ENCODE measurements at regions of chr19 and their contacts with region 1.

Region 1: DNA sequence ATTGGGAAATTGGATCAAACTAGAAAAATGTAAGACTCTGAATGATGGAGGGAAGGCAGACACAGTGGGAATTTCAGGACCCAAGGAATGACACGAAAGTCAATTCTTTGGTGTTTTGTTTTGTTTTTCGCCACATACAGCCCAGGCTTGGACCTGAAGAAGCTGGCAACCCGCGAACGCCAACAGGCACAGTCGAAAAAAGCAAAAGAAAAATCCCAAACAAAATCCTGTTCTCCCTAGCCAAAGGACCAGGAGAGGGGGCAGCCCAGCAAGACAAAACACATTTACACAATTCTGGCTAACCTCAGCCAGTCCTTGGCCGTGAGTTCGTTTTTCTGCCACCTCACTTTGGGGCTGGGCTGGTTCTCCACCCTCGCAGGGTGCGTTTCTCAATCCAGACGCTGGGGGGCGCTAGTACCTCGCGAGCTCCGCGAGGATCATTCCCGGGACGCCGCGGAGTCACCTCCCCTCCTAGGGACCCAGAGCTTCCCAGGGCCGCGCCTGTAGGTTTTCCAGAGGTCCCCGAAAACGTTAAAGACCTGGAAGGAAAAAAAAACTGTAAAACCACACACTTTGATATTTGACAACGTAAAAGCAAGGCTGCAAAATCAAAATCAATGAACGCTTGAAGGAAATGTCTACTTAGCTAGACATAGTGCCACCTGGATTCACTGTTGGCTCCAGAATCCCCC is 34.9 kb upstream of the TPM4 start:
- DNase-seq: peak; percentile 60 to 75 (median 66)
- H3K4me3 ChIP-seq: no peak overlapping the region
- H3K4me3 Mint-ChIP-seq: peak overlapping the region in 6 of 8 donors; percentile 7 to 63 (median 29)
- H3K27ac ChIP-seq: no peak overlapping the region
- H3K27ac Mint-ChIP-seq: peak overlapping the region in 1 of 7 donors; percentile 29
- H3K4me1 ChIP-seq: peaks cover 10% of the 10 kb centered on the region
- H3K4me1 Mint-ChIP-seq: peaks cover 7 to 17% (median 12%) of the 10 kb centered on the region in 4 donors
- H3K27me3 ChIP-seq: no peaks in the 10 kb centered on the region
- H3K27me3 Mint-ChIP-seq: peaks cover 0 to 1% of the 10 kb centered on the region in 2 donors

Region 2: DNA sequence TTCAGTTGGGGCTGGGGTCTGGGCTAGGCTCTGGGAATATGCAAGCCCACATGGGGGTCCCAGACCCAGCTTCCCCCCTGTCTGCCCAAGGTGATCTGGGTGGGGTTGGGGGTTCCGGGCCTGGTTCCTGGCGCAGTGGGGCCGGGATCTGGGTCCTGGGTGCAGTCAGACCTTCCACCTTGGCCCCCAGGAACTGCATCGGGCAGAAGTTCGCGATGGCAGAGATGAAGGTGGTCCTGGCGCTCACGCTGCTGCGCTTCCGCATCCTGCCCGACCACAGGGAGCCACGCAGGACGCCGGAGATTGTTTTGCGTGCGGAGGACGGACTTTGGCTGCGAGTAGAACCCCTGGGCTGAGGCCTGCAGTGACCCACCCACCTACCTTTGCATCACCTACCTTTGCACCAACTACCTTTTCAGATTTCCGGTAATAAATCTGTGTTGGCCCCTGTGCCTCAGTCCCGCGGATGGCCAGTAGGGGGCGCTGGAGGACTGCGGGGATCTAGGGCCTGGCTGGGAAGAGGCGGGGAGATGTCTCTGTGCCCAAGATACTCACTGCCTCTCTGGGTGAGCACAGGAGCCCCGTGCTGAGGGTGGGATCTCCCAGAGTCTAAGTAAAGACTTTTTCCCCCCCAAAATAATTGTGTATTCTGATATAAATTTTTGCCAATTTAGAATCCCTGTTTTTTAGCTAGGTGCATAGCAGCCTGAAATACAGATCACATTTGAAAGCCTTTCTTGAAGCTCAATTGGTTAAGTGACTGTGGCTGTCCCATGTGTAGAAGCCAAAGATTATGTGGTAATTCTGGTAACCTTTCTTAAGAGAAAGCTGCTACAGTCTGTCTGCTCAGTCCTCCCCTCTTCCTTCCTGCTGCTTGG is 412.2 kb before region 1 on chr19:
- CTCF ChIA-PET with region 1: interaction called, 11 read pairs
- POLR2A ChIA-PET with region 1: no interaction called
- intact Hi-C with region 1: loop called (anchors 10 kb)
- DNase-seq: peak; percentile 80 to 86 (median 81)
- H3K4me3 ChIP-seq: no peak overlapping the region
- H3K4me3 Mint-ChIP-seq: no peak overlapping the region
- H3K27ac ChIP-seq: no peak overlapping the region
- H3K27ac Mint-ChIP-seq: no peak overlapping the region
- H3K4me1 ChIP-seq: peaks cover 14% of the 10 kb centered on the region
- H3K4me1 Mint-ChIP-seq: peaks cover 2 to 13% (median 9%) of the 10 kb centered on the region in 4 donors
- H3K27me3 ChIP-seq: no peaks in the 10 kb centered on the region
- H3K27me3 Mint-ChIP-seq: peaks cover 3 to 14% of the 10 kb centered on the region in 2 donors

Region 3: GRCh38 chr19:15986701-15987100 is 54.7 kb before region 1 on chr19:
- CTCF ChIA-PET with region 1: no interaction called
- POLR2A ChIA-PET with region 1: no interaction called
- intact Hi-C with region 1: no loop called
- DNase-seq: peak in 2 of 5 donors; percentile 18 to 39
- H3K4me3 ChIP-seq: no peak overlapping the region
- H3K4me3 Mint-ChIP-seq: no peak overlapping the region
- H3K27ac ChIP-seq: no peak overlapping the region
- H3K27ac Mint-ChIP-seq: no peak overlapping the region
- H3K4me1 ChIP-seq: no peaks in the 10 kb centered on the region
- H3K4me1 Mint-ChIP-seq: peaks cover 0 to 9% (median 3%) of the 10 kb centered on the region in 4 donors
- H3K27me3 ChIP-seq: peaks cover 6% of the 10 kb centered on the region
- H3K27me3 Mint-ChIP-seq: peaks cover 14 to 20% of the 10 kb centered on the region in 2 donors

Region 4: GRCh38 chr19:16062789-16063188 is 21.3 kb after region 1 on chr19:
- CTCF ChIA-PET with region 1: interaction called, 26 read pairs
- POLR2A ChIA-PET with region 1: interaction called, 3 read pairs
- intact Hi-C with region 1: no loop called
- DNase-seq: peak; percentile 62 to 73 (median 67)
- H3K4me3 ChIP-seq: no peak overlapping the region
- H3K4me3 Mint-ChIP-seq: no peak overlapping the region
- H3K27ac ChIP-seq: no peak overlapping the region
- H3K27ac Mint-ChIP-seq: peak overlapping the region in 4 of 7 donors; percentile 15 to 56 (median 34)
- H3K4me1 ChIP-seq: peaks cover 12% of the 10 kb centered on the region
- H3K4me1 Mint-ChIP-seq: peaks cover 13 to 22% (median 19%) of the 10 kb centered on the region in 4 donors
- H3K27me3 ChIP-seq: no peaks in the 10 kb centered on the region
- H3K27me3 Mint-ChIP-seq: no peaks in the 10 kb centered on the region

Region 5: GRCh38 chr19:16088351-16089009 is 47.0 kb after region 1 on chr19:
- CTCF ChIA-PET with region 1: interaction called, 15 read pairs
- POLR2A ChIA-PET with region 1: interaction called, 6 read pairs
- intact Hi-C with region 1: no loop called
- DNase-seq: peak in 1 of 5 donors; percentile 10
- H3K4me3 ChIP-seq: no peak overlapping the region
- H3K4me3 Mint-ChIP-seq: peak overlapping the region in 4 of 8 donors; percentile 15 to 54 (median 34)
- H3K27ac ChIP-seq: no peak overlapping the region
- H3K27ac Mint-ChIP-seq: peak overlapping the region; percentile 61 to 82 (median 72)
- H3K4me1 ChIP-seq: peaks cover 53% of the 10 kb centered on the region
- H3K4me1 Mint-ChIP-seq: peaks cover 27 to 58% (median 36%) of the 10 kb centered on the region in 4 donors
- H3K27me3 ChIP-seq: no peaks in the 10 kb centered on the region
- H3K27me3 Mint-ChIP-seq: no peaks in the 10 kb centered on the region

Region 6: DNA sequence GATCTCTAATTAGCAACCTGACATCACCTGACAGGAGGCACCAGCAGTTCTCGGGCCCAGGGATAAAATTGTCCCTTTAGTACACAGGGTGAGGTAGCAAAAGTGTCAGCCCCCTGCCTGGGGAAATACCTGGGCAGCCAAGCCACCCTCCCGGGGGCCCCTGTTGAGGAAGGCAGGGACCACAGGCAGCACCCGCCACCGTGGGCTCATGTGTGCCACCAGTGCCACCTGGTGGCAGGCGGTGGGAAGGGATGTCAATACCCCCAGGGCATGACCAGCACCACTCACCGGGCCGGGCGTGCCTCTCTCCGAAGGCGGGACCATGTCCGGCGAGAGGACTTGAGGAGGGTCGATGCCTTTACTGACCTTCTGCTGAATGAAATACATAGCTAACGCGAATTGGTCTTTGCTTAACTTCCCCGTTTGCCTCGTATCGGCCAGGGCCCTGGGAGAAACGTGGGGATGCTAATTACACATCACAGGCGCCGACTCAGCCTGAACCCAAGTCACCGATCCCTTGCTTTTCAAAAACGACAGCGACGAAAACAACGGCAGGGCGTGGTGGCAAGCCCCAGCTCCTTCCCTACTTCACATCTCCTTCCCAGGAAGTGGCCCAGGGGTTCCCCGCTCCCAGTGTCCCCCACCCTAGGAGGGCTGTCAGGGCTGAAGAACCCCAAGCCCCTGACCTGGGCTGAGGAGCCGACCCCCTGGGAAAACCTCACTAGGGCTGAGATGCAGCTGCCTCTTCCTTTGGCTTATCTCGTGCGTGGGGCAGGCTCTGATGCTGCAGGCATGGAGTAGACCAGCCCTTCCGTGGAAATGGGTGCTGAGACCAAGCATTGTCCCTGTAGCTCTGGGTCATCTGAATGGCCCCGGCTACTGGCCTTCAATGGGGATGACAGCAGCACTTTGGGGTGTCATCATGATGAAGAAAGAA is 376.5 kb after region 1 on chr19:
- CTCF ChIA-PET with region 1: interaction called, 6 read pairs
- POLR2A ChIA-PET with region 1: no interaction called
- intact Hi-C with region 1: loop called (anchors 1 kb)
- DNase-seq: peak; percentile 62 to 72 (median 66)
- H3K4me3 ChIP-seq: no peak overlapping the region
- H3K4me3 Mint-ChIP-seq: no peak overlapping the region
- H3K27ac ChIP-seq: no peak overlapping the region
- H3K27ac Mint-ChIP-seq: peak overlapping the region in 5 of 7 donors; percentile 32 to 66 (median 57)
- H3K4me1 ChIP-seq: peaks cover 7% of the 10 kb centered on the region
- H3K4me1 Mint-ChIP-seq: peaks cover 1 to 13% (median 4%) of the 10 kb centered on the region in 4 donors
- H3K27me3 ChIP-seq: no peaks in the 10 kb centered on the region
- H3K27me3 Mint-ChIP-seq: no peaks in the 10 kb centered on the region